ENCODE measurements at regions of chr4 and their contacts with region 1.

Region 1: GRCh38 chr4:7192252-7193029 is at the start of gene SORCS2:
- DNase-seq: peak; percentile 83
- ATAC-seq: peak; percentile 84
- H3K4me3 ChIP-seq: peak within 1 kb of the TSS; percentile 42
- H3K27ac ChIP-seq: no peak within 1 kb of the TSS
- H3K4me1 ChIP-seq: peaks cover 4% of the 10 kb centered on the region
- H3K27me3 ChIP-seq: peaks cover 56% of the 10 kb centered on the region
- CTCF ChIP-seq: peak; percentile 50
- total RNA-seq, gene SORCS2: 7.2 TPM

Region 2: DNA sequence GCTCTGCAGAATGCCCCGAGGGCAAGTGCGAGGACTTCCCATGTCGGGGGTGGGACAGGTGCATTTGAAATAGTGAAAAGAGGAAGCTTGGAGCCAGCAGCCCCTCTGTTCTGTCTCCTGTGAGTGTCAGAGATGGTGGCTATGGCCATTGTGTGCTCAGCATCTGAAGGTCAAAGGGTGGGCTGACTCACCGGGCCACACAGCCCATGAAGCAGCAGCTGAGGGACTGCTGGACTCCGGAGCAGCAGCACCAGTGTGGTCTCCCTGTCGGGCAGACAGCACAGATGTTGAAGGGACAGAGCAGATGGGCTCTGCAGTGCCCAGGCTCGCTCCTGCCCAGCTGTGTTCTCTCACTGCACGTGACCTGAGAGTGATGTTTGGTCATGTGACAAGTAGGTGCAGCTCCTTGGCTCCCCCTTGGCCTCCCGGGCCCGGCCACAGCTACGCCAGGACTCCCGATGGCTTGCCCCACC is 229.3 kb before region 1 on chr4:
- intact Hi-C with region 1: no loop called
- DNase-seq: no peak
- ATAC-seq: no peak
- H3K4me3 ChIP-seq: no peak overlapping the region
- H3K27ac ChIP-seq: no peak overlapping the region
- H3K4me1 ChIP-seq: peaks cover 18% of the 10 kb centered on the region
- H3K27me3 ChIP-seq: no peaks in the 10 kb centered on the region
- CTCF ChIP-seq: no peak

Region 3: GRCh38 chr4:7434766-7435150 is 242.3 kb after region 1 on chr4 and contains the start of gene PSAPL1:
- intact Hi-C with region 1: no loop called
- DNase-seq: peak; percentile 86
- ATAC-seq: peak; percentile 86
- H3K4me3 ChIP-seq: no peak within 1 kb of the TSS
- H3K27ac ChIP-seq: no peak within 1 kb of the TSS
- H3K4me1 ChIP-seq: no peaks in the 10 kb centered on the region
- H3K27me3 ChIP-seq: no peaks in the 10 kb centered on the region
- CTCF ChIP-seq: no peak
- total RNA-seq, gene PSAPL1: 0.14 TPM

Region 4: DNA sequence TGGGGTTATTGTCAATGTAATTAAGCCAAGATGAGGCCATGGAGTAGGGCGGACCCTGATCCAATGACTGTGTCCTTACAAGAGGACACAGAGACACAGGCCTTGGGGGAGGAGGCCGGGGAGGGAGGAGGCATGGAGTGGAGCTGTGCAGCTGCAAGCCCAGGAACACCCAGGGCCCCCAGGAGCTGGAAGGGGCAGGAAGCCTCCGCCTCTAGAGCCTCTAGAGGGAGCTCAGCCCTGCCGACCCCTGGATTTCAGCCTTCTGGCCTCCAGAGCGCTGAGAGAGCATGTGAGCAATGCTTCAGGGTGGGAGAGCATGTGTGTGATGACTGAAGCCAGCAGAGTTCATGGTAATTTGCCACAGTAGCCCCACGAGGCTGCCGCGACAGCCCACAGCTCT is 512.6 kb after region 1 on chr4:
- intact Hi-C with region 1: loop called (anchors 10 kb)
- DNase-seq: no peak
- ATAC-seq: no peak
- H3K4me3 ChIP-seq: no peak overlapping the region
- H3K27ac ChIP-seq: no peak overlapping the region
- H3K4me1 ChIP-seq: no peaks in the 10 kb centered on the region
- H3K27me3 ChIP-seq: peaks cover 4% of the 10 kb centered on the region
- CTCF ChIP-seq: no peak